ENCODE measurements at regions of chrX and their contacts with region 1.

Region 1: GRCh38 chrX:136694431-136695087 is 46.6 kb downstream of the CD40LG start:
- DNase-seq: peak in 1 of 2 donors; percentile 81
- ATAC-seq: peak; percentile 65 to 72 (median 69)
- H3K4me3 ChIP-seq: no peak overlapping the region
- H3K4me3 Mint-ChIP-seq: peak overlapping the region; percentile 50
- H3K27ac ChIP-seq: peak overlapping the region; percentile 64
- H3K27ac Mint-ChIP-seq: peak overlapping the region; percentile 81 to 87
- H3K4me1 ChIP-seq: peaks cover 41% of the 10 kb centered on the region
- H3K4me1 Mint-ChIP-seq: peaks cover 46 to 49% of the 10 kb centered on the region in 2 donors
- H3K27me3 ChIP-seq: no peaks in the 10 kb centered on the region
- H3K27me3 Mint-ChIP-seq: peaks cover 0 to 11% of the 10 kb centered on the region in 2 donors
- CTCF ChIP-seq: peak; percentile 65

Region 2: DNA sequence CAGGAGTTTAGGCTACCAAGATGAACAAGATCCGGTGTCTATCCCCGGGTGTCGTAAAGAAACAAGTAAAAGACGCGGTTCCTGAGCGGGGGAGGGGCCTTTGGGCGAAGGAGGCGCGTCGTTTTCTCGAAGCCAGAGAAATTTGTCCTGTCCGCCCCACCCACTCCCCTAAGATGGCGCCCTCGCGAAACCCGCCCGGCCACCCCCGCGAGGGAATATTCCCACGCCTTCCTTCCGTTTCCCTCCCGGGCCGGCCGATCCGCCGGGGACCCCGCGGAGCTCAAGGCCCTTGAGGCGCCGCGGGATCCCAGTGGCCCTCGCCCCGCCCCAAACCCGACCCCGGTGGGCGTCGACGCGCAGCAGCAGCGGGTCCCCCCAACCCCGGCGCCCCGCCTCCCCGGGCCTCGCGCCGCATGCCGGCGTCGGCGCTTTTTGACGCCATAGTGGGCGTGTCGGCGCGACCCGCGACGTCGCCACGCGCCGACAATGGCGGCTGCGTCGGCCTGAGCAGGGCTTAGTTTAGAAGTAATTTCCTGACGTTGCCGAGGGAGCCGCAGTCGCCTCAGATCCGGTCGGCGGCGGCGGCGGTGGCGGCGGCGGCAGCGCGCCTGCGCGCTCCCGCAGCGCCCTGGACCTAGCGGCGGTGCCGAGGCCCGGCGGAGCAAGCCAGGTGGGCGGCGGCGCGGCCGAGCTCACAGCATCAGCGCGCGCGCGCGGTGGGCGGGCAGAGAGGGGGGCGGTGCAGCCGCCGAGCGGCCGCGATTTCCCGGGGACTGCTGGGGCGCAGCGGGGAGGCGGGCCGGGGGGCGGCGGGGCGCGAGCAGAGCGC is 197.6 kb before region 1 on chrX and contains the start of gene HTATSF1:
- intact Hi-C with region 1: loop called (anchors 10 kb)
- DNase-seq: peak; percentile 78 to 93
- ATAC-seq: peak; percentile 79 to 92 (median 81)
- H3K4me3 ChIP-seq: peak within 1 kb of the TSS; percentile 84
- H3K4me3 Mint-ChIP-seq: peak within 1 kb of the TSS; percentile 89
- H3K27ac ChIP-seq: peak within 1 kb of the TSS; percentile 96
- H3K27ac Mint-ChIP-seq: peak within 1 kb of the TSS; percentile 93
- H3K4me1 ChIP-seq: peaks cover 5% of the 10 kb centered on the region
- H3K4me1 Mint-ChIP-seq: peaks cover 12 to 16% of the 10 kb centered on the region in 2 donors
- H3K27me3 ChIP-seq: no peaks in the 10 kb centered on the region
- H3K27me3 Mint-ChIP-seq: peaks cover 5 to 10% of the 10 kb centered on the region in 2 donors
- CTCF ChIP-seq: no peak
- total RNA-seq, gene HTATSF1: 26.4 to 30.4 (median 28.2) TPM

Region 3: GRCh38 chrX:136577552-136577951 is 117.0 kb before region 1 on chrX:
- intact Hi-C with region 1: loop called (anchors 5 kb)
- DNase-seq: peak; percentile 43 to 81
- ATAC-seq: peak; percentile 90 to 100 (median 99)
- H3K4me3 ChIP-seq: no peak overlapping the region
- H3K4me3 Mint-ChIP-seq: no peak overlapping the region
- H3K27ac ChIP-seq: no peak overlapping the region
- H3K27ac Mint-ChIP-seq: peak overlapping the region in 1 of 2 donors; percentile 75
- H3K4me1 ChIP-seq: peaks cover 7% of the 10 kb centered on the region
- H3K4me1 Mint-ChIP-seq: peaks cover 8% of the 10 kb centered on the region in 2 donors
- H3K27me3 ChIP-seq: no peaks in the 10 kb centered on the region
- H3K27me3 Mint-ChIP-seq: peaks cover 0 to 33% of the 10 kb centered on the region in 2 donors
- CTCF ChIP-seq: peak; percentile 58

Region 4: DNA sequence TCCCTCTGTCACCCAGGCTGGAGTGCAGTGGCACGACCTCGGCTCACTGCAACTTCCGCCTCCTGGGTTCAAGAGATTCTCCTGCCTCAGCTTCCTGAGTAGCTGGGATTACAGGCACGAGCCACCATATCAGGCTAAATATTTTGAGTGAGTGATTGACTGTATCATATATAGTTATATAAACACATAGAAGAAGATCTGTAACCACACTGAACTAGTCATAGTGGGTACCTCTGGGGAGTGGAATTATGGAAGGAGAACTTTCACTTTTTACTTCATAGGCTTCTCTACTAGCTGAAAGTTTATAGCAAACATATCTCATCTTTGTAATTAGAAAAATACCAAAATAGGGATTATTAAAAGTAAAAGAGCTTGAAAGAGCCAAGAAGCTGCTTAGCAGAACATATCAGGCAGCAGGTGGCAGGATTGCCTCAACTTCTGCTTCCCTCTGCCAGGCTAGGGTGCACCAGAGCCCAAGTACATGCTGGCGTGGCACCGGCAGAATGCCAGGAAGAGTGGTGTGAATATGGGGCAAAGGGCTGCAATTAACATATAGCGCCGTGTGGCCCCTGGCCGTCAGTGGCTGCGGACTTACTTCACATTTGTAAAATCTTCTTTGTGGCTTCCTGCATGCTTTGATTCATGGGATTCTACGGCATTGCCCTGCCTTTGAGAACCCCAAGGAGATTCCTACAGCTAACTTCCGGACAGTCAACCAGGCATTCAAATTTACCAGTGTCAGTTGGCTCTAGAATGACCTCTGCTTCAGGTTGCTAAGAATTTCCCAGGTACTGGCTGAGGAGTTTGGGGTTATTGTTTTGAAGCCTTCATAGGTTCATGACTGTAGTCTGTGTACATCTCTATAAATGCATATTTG is 86.0 kb before region 1 on chrX:
- intact Hi-C with region 1: loop called (anchors 1 kb)
- DNase-seq: peak; percentile 19 to 82
- ATAC-seq: peak in 2 of 3 donors; percentile 69 to 77
- H3K4me3 ChIP-seq: no peak overlapping the region
- H3K4me3 Mint-ChIP-seq: peak overlapping the region; percentile 25
- H3K27ac ChIP-seq: no peak overlapping the region
- H3K27ac Mint-ChIP-seq: no peak overlapping the region
- H3K4me1 ChIP-seq: peaks cover 12% of the 10 kb centered on the region
- H3K4me1 Mint-ChIP-seq: peaks cover 12 to 16% of the 10 kb centered on the region in 2 donors
- H3K27me3 ChIP-seq: no peaks in the 10 kb centered on the region
- H3K27me3 Mint-ChIP-seq: peaks cover 0 to 24% of the 10 kb centered on the region in 2 donors
- CTCF ChIP-seq: peak; percentile 47

Region 5: GRCh38 chrX:136635235-136635634 is 59.3 kb before region 1 on chrX:
- intact Hi-C with region 1: loop called (anchors 5 kb)
- DNase-seq: peak in 1 of 2 donors; percentile 74
- ATAC-seq: peak; percentile 82 to 89 (median 87)
- H3K4me3 ChIP-seq: no peak overlapping the region
- H3K4me3 Mint-ChIP-seq: peak overlapping the region; percentile 65
- H3K27ac ChIP-seq: peak overlapping the region; percentile 67
- H3K27ac Mint-ChIP-seq: peak overlapping the region; percentile 60 to 73
- H3K4me1 ChIP-seq: peaks cover 51% of the 10 kb centered on the region
- H3K4me1 Mint-ChIP-seq: peaks cover 45 to 46% of the 10 kb centered on the region in 2 donors
- H3K27me3 ChIP-seq: no peaks in the 10 kb centered on the region
- H3K27me3 Mint-ChIP-seq: peaks cover 3 to 13% of the 10 kb centered on the region in 2 donors
- CTCF ChIP-seq: no peak